ENCODE measurements at regions of chr11 and their contacts with region 1.

Region 1: DNA sequence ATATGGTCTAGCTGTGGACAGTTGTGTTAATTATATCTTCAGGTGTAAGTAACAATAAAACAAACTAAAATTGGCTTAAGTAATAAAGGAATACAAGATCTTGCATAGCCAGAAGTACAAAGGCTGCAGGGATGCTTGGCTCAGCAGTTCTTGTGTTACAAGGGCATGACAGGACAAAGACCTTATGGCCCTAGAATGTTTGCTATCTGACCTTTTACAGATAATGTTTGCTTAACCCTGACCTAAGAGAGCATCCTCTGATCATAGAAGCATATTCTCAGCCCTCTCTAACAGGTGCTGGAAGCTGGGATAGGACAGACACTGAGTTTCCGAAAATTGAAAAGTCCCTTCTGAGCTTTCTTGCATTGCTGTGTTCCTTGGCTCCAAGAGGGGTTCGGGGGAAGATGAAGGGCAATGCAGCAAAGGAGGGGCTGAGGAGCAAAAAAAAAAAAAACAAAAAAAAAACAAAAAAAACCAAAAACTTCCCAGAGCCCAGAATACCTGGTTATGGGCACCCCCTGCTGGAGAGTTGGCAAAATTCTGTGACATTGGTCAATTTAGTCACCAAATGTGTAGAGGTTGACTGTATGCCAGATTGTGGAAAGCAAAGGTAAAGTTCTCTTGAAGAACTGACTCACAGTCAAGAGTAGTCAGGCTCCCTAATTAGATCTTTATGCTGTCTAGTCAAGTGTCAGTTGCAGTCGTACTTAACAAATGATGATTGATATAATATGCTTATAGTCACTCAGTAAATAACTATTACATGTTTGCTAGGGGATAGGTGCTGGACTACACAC is 10.4 kb upstream of the HIKESHI start:
- DNase-seq: peak; percentile 57 to 76 (median 64)
- ATAC-seq: peak; percentile 80
- H3K4me3 ChIP-seq: no peak overlapping the region
- H3K27ac ChIP-seq: no peak overlapping the region
- H3K4me1 ChIP-seq: no peaks in the 10 kb centered on the region; a peak in 1 of 5 replicates
- H3K27me3 ChIP-seq: no peaks in the 10 kb centered on the region
- CTCF ChIP-seq: peak; percentile 70 to 88 (median 84)
- EP300 ChIP-seq: no peak
- POLR2A ChIP-seq: no peak
- RAD21 ChIP-seq: peak; percentile 78 to 83

Region 2: GRCh38 chr11:85602526-85603213 is 689.0 kb before region 1 on chr11:
- CTCF ChIA-PET with region 1: no interaction called
- POLR2A ChIA-PET with region 1: no interaction called
- in situ Hi-C with region 1: loop called (anchors 10 kb)
- intact Hi-C with region 1: loop called (anchors 5 kb)
- DNase-seq: no peak
- ATAC-seq: no peak
- H3K4me3 ChIP-seq: no peak overlapping the region
- H3K27ac ChIP-seq: no peak overlapping the region
- H3K4me1 ChIP-seq: no peaks in the 10 kb centered on the region; a peak in 2 of 5 replicates
- H3K27me3 ChIP-seq: no peaks in the 10 kb centered on the region
- CTCF ChIP-seq: no peak
- EP300 ChIP-seq: no peak
- POLR2A ChIP-seq: no peak
- RAD21 ChIP-seq: no peak

Region 3: DNA sequence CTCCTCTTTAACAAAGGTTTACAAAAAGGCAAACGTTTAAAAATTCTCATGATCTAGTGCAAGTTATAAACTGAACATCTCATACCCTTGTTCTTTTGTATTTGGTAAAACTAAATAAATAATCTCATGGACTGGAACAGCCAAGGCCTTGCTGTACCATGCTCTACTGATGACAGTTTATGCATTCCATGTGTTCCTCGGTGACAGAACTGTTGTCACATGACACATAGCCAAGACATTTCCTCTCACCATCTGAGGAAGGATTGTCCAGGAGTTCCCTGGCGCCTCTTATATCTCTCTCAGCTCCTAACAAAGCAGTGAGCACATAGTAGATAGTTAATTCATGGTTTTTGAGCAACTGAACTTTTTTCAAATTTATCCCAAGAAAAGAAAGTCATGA is 423.9 kb before region 1 on chr11:
- CTCF ChIA-PET with region 1: no interaction called
- POLR2A ChIA-PET with region 1: no interaction called
- in situ Hi-C with region 1: loop called (anchors 10 kb)
- intact Hi-C with region 1: no loop called
- DNase-seq: no peak
- ATAC-seq: no peak
- H3K4me3 ChIP-seq: no peak overlapping the region
- H3K27ac ChIP-seq: no peak overlapping the region
- H3K4me1 ChIP-seq: no peaks in the 10 kb centered on the region
- H3K27me3 ChIP-seq: peaks cover 4 to 5% of the 10 kb centered on the region in 2 experiments; a peak in 3 of 5 replicates
- CTCF ChIP-seq: no peak
- EP300 ChIP-seq: no peak
- POLR2A ChIP-seq: no peak
- RAD21 ChIP-seq: no peak

Region 4: DNA sequence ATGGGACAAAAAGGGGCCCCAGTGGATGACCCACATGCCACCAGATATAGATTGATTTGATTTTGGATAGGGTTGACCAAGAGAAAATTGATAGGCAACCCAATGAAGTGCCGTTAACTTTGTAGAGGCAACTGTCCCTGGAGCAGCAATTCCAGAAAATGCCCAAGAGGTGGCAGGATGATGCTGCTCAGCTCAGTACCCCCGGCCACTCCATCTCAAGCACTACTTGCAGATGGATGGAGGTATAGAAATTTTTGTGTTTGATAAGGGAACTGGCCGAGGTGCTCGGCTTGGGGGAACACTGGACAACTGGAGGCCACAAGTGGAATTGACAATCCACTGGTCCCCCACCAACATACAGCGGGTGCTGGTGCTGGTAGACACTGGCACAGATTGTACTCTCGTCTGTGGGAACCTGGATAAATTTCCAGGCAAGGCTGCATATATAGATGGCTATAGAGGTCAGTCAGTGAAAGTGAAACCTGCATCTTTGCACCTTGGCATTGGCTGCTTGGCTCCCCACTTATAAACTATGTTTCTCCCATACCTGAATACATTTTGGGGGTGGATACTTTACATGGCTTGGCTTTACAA is 350.2 kb before region 1 on chr11:
- CTCF ChIA-PET with region 1: interaction called, 7 read pairs
- POLR2A ChIA-PET with region 1: no interaction called
- in situ Hi-C with region 1: loop called (anchors 5 kb)
- intact Hi-C with region 1: loop called (anchors 1 kb)
- DNase-seq: peak; percentile 38 to 69 (median 52)
- ATAC-seq: peak; percentile 92
- H3K4me3 ChIP-seq: no peak overlapping the region
- H3K27ac ChIP-seq: no peak overlapping the region
- H3K4me1 ChIP-seq: no peaks in the 10 kb centered on the region; a peak in 1 of 5 replicates
- H3K27me3 ChIP-seq: no peaks in the 10 kb centered on the region
- CTCF ChIP-seq: peak; percentile 73 to 86 (median 82)
- EP300 ChIP-seq: no peak
- POLR2A ChIP-seq: no peak
- RAD21 ChIP-seq: peak; percentile 72 to 89

Measured in K562 (cell line).